ENCODE measurements at regions of chr20 and their contacts with region 1.

Region 1: GRCh38 chr20:13302647-13303450 is 81.8 kb downstream of the ISM1 start:
- DNase-seq: peak; percentile 61
- H3K4me3 Mint-ChIP-seq: no peak overlapping the region
- H3K27ac Mint-ChIP-seq: no peak overlapping the region
- H3K4me1 Mint-ChIP-seq: no peaks in the 10 kb centered on the region
- H3K27me3 Mint-ChIP-seq: no peaks in the 10 kb centered on the region
- CTCF ChIP-seq: peak; percentile 68

Region 2: DNA sequence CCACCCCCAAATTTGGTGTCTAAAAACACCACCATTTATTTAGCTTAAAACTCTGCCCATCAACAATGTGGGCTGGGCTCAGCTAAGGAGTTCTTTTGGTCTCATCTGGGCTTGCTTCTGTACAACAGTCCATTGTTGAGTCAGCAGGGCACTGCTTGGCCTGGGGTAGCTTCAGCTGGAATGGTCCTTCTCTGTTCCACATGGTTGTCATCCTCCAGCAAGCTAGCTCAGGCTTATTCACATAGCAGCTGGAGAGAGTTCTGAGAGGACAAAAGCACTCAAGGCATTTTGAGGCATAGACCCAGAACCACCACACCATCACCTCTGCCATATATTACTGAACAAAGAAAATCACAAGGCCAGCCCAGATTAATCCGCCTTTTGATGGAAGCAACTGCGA is 177.4 kb before region 1 on chr20:
- CTCF ChIA-PET with region 1: interaction called, 170 read pairs
- POLR2A ChIA-PET with region 1: no interaction called
- intact Hi-C with region 1: no loop called
- DNase-seq: no peak
- H3K4me3 Mint-ChIP-seq: no peak overlapping the region
- H3K27ac Mint-ChIP-seq: peak overlapping the region; percentile 26
- H3K4me1 Mint-ChIP-seq: no peaks in the 10 kb centered on the region
- H3K27me3 Mint-ChIP-seq: no peaks in the 10 kb centered on the region
- CTCF ChIP-seq: no peak

Region 3: DNA sequence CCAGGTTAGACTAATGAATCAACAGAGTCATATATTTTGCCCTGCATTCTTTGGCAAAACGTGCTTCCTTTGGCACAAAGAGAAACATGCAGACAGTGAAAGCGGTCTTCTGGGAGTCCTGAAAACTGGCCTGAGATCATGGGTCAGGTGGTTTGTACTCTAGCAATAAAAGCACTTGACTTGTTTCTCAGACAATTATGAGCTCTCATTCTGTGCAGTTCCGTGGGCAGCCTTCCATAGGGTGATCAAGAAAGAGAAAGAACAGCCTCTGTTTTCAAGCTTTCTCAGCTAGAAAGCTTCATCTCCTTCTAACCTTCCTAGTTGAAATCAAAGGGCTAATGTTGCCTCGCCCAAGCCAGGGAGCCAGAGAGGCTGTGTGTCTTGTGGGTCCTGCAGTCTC is 144.5 kb before region 1 on chr20:
- CTCF ChIA-PET with region 1: interaction called, 10 read pairs
- POLR2A ChIA-PET with region 1: no interaction called
- intact Hi-C with region 1: no loop called
- DNase-seq: no peak
- H3K4me3 Mint-ChIP-seq: no peak overlapping the region
- H3K27ac Mint-ChIP-seq: no peak overlapping the region
- H3K4me1 Mint-ChIP-seq: no peaks in the 10 kb centered on the region
- H3K27me3 Mint-ChIP-seq: no peaks in the 10 kb centered on the region
- CTCF ChIP-seq: no peak

Region 4: GRCh38 chr20:13261460-13262301 is 41.2 kb before region 1 on chr20:
- CTCF ChIA-PET with region 1: interaction called, 24 read pairs
- POLR2A ChIA-PET with region 1: no interaction called
- intact Hi-C with region 1: no loop called
- DNase-seq: peak; percentile 63
- H3K4me3 Mint-ChIP-seq: no peak overlapping the region
- H3K27ac Mint-ChIP-seq: no peak overlapping the region
- H3K4me1 Mint-ChIP-seq: peaks cover 8% of the 10 kb centered on the region
- H3K27me3 Mint-ChIP-seq: no peaks in the 10 kb centered on the region
- CTCF ChIP-seq: peak; percentile 62

Region 5: GRCh38 chr20:13286607-13287006 is 16.2 kb before region 1 on chr20:
- CTCF ChIA-PET with region 1: interaction called, 142 read pairs
- POLR2A ChIA-PET with region 1: interaction called, 8 read pairs
- intact Hi-C with region 1: no loop called
- DNase-seq: peak; percentile 91
- H3K4me3 Mint-ChIP-seq: peak overlapping the region; percentile 33
- H3K27ac Mint-ChIP-seq: peak overlapping the region; percentile 98
- H3K4me1 Mint-ChIP-seq: peaks cover 28% of the 10 kb centered on the region
- H3K27me3 Mint-ChIP-seq: no peaks in the 10 kb centered on the region
- CTCF ChIP-seq: no peak

Region 6: DNA sequence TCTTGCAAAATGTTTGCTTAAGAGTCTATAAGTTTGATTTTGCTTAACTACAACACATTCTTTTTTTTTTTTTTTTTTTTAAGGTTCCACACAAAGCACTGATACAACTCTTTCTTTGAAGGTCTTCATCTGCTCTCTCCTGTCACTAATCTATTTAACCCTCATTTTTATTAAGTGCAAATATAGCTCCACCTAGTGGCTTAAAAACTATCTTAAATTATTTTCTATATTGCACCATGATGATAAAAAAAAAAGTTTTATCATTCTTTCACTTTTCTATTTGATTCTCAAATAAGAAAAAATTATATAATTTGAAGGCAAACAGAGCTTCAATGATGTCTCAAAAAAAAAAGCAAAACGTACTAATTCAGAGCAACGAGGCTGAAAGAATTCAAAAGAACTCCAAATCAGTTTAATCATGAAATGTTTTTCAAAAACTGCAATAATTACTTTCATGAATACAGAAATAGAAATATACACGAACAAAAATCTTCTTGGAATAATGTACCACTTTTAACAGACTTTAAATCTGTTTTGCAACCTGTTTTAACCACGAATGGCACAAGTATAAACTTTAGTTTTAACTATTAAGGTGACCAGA is 469.1 kb after region 1 on chr20:
- CTCF ChIA-PET with region 1: interaction called, 12 read pairs
- POLR2A ChIA-PET with region 1: no interaction called
- intact Hi-C with region 1: no loop called
- DNase-seq: no peak
- H3K4me3 Mint-ChIP-seq: no peak overlapping the region
- H3K27ac Mint-ChIP-seq: peak overlapping the region; percentile 87
- H3K4me1 Mint-ChIP-seq: peaks cover 15% of the 10 kb centered on the region
- H3K27me3 Mint-ChIP-seq: no peaks in the 10 kb centered on the region
- CTCF ChIP-seq: peak; percentile 42